Right ventricle myocardium superior (tissue), 1 donor: ENCODE measurements at regions of chr3 and their contacts with region 1.

Region 1: GRCh38 chr3:137105277-137105977 is 147.6 kb downstream of the IL20RB start:
- DNase-seq: no peak
- ATAC-seq: peak; percentile 82

Region 2: GRCh38 chr3:136979684-136980083 is 125.7 kb before region 1 on chr3:
- intact Hi-C with region 1: no loop called
- DNase-seq: no peak
- ATAC-seq: no peak

Region 3: GRCh38 chr3:137946345-137946973 is 841.0 kb after region 1 on chr3:
- intact Hi-C with region 1: loop called (anchors 5 kb)
- DNase-seq: peak; percentile 59
- ATAC-seq: peak; percentile 43

Region 4: DNA sequence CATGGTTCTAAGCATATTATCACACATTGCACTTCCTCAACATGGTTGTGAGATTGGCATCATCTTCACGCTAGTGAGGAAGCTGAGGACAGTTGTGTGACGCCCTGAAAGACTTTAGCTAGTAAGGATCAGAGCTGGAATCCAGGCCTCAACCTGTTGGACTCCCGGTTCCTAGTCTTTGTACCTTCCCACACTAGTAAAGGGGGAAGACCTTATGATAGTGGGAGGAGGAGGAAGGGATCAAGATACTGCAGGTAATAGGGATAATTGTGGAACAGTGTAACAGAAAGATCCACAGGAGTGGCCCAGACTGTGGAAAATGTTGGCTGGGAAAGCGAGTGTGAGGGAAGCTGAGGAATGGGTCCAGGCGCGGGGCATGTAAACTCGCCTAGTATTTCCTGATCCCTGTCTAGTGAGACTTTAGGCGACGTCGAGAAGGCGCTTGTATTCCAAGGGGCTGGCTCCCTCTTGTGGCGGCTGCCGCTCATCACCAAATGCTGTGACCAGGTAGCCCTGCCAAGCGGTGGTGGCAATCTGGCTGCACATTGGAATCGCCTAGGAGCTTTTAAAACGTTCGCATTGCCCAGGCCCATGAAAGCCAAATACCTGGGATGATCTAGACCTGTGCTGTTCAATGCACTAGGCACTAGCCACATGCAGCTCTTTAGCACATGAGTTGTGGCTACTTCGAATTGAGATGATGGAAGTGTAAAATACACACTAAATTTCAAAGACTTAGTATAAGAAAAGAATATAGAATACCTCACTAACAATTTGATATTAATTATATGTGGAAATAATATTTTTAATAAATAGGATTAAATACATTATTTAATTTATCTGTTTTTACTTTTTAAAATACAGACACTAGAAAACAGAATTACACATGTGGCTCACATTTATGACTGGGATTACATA is 865.7 kb after region 1 on chr3:
- intact Hi-C with region 1: loop called (anchors 10 kb)
- DNase-seq: peak; percentile 83
- ATAC-seq: peak; percentile 94

Region 5: DNA sequence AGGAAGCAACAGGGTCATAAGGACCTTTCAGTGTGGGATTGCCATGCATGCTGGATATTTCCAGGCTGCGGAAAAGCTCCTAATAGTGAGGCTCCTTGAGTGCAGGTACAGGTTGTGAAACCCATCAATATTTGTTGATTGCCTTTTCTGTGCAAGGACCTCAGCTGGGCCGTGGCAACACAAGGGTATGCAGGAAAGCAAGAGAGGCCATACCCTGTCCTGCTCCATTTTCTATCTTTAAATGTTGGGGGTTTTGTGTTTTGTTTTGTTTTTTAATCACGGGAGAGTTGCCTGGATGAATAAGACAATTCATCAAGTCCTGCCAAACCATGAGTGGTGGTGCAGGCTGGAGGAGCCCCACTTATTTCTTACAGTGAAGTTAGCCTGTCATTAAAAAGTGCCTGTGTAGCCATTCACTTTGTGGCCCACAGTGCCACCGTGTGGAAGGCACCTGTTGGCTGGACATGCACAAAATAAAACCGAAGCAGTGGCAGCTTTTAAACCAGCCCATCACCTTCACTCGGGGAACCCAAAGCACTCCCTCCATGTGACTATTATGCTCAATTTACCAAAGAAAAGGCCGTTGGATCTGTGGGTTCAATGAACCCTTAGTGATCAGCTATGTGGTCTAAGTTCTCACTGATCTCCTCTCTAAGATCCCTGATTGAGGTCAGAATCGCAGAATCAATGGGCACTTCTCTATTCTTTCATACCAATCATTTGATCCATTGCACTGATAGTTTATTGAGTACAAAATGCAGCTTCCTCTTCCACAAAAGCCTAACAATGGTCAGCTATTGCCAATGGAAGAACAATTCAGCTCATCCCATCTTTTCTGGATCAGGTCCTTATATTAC is 946.7 kb after region 1 on chr3:
- intact Hi-C with region 1: loop called (anchors 10 kb)
- DNase-seq: peak; percentile 54
- ATAC-seq: peak; percentile 78